ENCODE measurements at regions of chr6 and their contacts with region 1.

Region 1: GRCh38 chr6:25066593-25066992 is 130.8 kb upstream of the RIPOR2 start:
- DNase-seq: no peak
- ATAC-seq: no peak
- H3K4me3 ChIP-seq: no peak overlapping the region
- H3K27ac ChIP-seq: no peak overlapping the region
- H3K4me1 ChIP-seq: no peaks in the 10 kb centered on the region
- H3K27me3 ChIP-seq: no peaks in the 10 kb centered on the region
- CTCF ChIP-seq: no peak
- POLR2A ChIP-seq: no peak

Region 2: DNA sequence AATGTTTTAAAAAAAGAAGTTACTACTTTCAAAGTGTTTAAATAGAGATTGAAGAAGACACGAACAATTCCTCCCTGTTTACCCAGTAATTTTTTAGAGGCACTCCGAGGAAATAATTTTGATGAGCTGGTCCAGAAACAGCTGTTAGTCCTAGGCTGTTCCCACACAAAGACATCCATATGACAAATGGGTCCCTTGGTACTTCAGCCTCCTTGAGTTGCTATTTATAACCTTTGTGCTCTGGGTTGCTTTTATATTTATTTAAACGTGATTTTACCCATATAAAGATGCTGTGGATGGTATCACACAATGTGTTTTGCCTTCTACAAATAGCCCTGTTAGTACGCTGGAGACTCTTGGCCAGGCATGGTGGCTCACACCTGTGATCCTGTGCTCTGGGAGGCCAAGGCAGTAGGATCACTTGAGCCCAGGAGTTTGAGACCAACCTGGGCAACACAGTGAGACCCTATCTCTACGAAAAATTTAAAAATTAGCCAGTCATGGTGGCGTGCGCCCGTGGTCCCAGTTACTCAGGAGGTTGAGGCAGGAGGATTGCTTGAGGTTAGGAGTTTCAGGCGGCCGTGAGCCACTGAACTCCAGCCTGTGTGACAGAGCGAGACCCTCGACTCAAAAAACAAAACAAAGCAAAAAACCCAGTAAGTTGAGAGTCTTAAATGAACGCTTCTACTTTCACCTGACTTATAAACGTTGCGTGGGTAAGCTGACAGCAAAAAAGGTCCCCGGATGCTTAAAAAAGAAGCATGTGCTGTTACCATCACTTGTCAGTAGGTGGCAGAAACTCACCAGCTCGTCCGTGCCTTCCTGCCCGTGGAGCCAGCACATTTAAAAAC is 211.0 kb before region 1 on chr6:
- intact Hi-C with region 1: loop called in 1 of 2 experiments (anchors 5 kb)
- DNase-seq: peak in 1 of 3 donors; percentile 45
- ATAC-seq: peak; percentile 88 to 91 (median 88)
- H3K4me3 ChIP-seq: no peak overlapping the region
- H3K27ac ChIP-seq: no peak overlapping the region
- H3K4me1 ChIP-seq: peaks cover 0 to 5% (median 0%) of the 10 kb centered on the region in 4 donors
- H3K27me3 ChIP-seq: no peaks in the 10 kb centered on the region
- CTCF ChIP-seq: peak; percentile 84 to 87 (median 85)
- POLR2A ChIP-seq: no peak

Measured in right lobe of liver (tissue), 6 donors.